ENCODE measurements at regions of chr9 and their contacts with region 1.

Region 1: DNA sequence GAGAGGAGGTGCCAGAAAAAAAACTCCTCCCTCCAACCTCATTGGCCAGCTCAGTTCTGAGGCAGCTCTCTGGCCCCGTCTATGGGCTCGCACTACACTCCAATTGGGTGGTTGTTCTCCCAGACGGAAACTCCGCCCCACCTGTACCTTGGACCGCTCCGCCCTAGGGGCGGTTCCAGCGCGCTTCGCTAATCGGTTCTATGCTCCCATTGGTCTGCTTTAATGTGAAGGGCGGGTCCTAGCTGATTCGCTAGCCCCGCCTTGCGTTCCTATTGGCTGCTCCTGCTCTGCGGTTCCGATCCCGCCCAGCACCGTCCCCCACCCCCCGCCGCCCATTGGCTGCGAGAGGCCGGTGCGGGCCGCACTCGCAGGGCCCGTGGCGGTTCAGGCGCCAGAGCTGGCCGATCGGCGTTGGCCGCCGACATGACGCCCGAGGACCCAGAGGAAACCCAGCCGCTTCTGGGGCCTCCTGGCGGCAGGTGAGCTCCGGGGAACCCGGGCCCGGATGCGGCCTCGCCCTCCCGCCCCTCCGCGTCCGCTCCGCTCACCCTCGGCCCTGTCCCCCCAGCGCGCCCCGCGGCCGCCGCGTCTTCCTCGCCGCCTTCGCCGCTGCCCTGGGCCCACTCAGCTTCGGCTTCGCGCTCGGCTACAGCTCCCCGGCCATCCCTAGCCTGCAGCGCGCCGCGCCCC is at the start of gene SLC2A8:
- DNase-seq: peak; percentile 63 to 98 (median 76)
- ATAC-seq: peak; percentile 92
- H3K4me3 ChIP-seq: peak within 1 kb of the TSS; percentile 44
- H3K4me3 Mint-ChIP-seq: peak within 1 kb of the TSS; percentile 75
- H3K27ac ChIP-seq: no peak within 1 kb of the TSS
- H3K27ac Mint-ChIP-seq: no peak within 1 kb of the TSS
- H3K4me1 ChIP-seq: peaks cover 28% of the 10 kb centered on the region
- H3K4me1 Mint-ChIP-seq: peaks cover 21% of the 10 kb centered on the region
- H3K27me3 ChIP-seq: peaks cover 66 to 83% of the 10 kb centered on the region in 2 experiments
- H3K27me3 Mint-ChIP-seq: peaks cover 87% of the 10 kb centered on the region
- CTCF ChIP-seq: peak; percentile 18
- total RNA-seq, gene SLC2A8: 1.6 to 1.8 TPM

Region 2: DNA sequence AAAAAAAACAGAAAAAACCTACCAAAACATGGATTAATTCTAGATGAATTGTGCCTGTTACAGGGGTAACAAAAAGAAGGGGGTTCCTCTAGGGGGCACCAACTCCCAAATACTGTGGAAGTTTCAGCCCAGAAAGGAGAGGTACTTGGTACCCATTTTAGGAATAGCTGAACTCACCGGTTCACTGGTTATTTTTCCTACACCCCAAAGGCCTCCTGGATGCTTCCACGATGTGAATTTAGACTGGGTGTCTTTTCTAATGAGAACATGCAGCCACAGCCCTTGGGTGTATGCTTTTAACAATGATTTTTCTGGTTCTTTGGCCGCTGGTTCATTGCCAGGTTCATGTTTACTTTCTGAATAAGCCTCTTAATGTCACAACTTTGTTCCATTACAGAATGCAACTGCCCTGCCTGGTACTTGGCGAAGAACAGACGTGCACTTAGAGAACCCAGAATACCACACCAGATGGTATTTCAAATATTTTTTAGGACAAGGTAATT is 85.7 kb before region 1 on chr9:
- CTCF ChIA-PET with region 1: no interaction called
- POLR2A ChIA-PET with region 1: no interaction called
- intact Hi-C with region 1: loop called in 1 of 2 experiments (anchors 5 kb)
- DNase-seq: peak in 8 of 14 experiments; percentile 3 to 55 (median 31)
- ATAC-seq: no peak
- H3K4me3 ChIP-seq: no peak overlapping the region
- H3K4me3 Mint-ChIP-seq: no peak overlapping the region
- H3K27ac ChIP-seq: no peak overlapping the region
- H3K27ac Mint-ChIP-seq: no peak overlapping the region
- H3K4me1 ChIP-seq: no peaks in the 10 kb centered on the region
- H3K4me1 Mint-ChIP-seq: no peaks in the 10 kb centered on the region
- H3K27me3 ChIP-seq: no peaks in the 10 kb centered on the region
- H3K27me3 Mint-ChIP-seq: peaks cover 38% of the 10 kb centered on the region
- CTCF ChIP-seq: peak; percentile 34

Measured in CD4-positive, alpha-beta T cell (primary cell).